Left cardiac atrium (tissue), 4 donors: ENCODE measurements at regions of chr7 and their contacts with region 1.

Region 1: DNA sequence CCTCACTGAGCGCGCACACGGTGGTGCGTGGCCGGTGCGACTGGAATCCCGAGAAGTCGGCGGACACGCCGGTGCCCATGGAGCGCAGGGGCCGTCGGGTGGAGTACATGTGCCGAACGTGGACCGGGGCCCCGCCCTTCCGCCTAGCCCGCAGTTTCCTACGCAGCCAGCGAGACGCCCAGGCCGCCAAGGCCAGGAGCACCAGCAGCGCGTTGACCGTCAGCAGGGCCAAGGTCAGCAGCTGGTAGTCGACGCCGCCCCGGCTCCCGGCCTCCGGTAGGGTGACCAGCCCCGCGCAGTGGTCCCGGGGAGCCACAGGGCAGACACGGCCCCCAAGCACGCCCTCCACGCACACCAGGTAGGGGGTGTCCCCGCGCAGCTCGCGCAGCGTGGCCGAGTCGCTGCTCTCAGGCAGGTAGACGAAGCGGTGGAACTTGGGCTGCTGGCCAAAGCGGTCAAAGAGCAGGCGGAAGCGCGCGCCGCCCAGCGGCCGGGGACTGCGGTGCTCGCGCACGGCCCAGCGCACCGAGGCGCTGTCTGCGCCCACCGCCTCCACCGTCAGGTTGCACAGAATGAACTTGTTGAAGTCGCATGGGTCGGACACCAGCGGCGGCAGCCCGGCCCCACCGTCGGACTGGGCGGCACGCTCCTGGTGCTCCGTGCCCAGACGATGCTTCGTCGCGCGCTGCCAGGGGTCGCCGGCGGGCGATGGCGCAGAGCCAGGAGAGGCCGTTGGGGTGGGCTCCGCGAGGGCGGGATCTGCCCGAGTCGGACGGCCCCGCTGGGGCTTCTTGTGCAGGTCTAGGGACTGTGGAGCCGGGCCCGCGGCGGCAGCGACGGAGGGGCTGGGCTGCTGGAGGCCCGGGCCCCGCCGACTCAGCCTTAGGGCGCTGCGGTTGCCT is 2.2 kb downstream of the TRIL start:
- DNase-seq: peak; percentile 83
- ATAC-seq: peak; percentile 54 to 63

Region 2: GRCh38 chr7:28926871-28927597 is 28.9 kb before region 1 on chr7:
- intact Hi-C with region 1: loop called in 1 of 2 experiments (anchors 2 kb)
- DNase-seq: peak; percentile 80
- ATAC-seq: peak; percentile 93 to 96

Region 3: GRCh38 chr7:28999895-29000716 is 44.1 kb after region 1 on chr7:
- intact Hi-C with region 1: loop called in 1 of 2 experiments (anchors 5 kb)
- DNase-seq: no peak
- ATAC-seq: peak; percentile 57 to 71

Region 4: DNA sequence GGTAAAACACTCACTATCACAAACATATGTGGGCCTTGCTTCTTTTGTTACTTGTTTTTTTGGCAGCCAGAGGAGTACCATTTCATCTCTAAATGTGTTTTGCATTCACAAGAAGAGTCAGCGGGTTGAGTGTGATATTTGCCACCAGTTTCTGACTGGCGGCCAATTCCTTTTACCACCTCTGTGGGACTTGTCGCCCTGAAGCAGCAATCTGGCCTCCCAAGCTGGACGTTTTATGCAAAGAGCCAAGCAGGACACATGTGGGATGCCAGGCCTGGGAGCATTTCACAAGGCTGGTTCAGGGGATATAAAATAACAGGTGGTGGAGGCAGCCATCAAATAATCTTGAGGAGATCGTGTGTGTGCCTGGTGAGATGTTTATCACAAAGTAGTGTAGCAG is 63.9 kb after region 1 on chr7:
- intact Hi-C with region 1: loop called in 1 of 2 experiments (anchors 10 kb)
- DNase-seq: peak; percentile 50
- ATAC-seq: peak; percentile 71 to 73

Region 5: GRCh38 chr7:29105752-29106668 is 150.0 kb after region 1 on chr7:
- intact Hi-C with region 1: loop called (anchors 10 kb)
- DNase-seq: no peak
- ATAC-seq: peak; percentile 66 to 72